ENCODE measurements at regions of chr10 and their contacts with region 1.

Region 1: GRCh38 chr10:83562381-83562780 is 576.9 kb upstream of the GHITM start:
- DNase-seq: no peak
- H3K4me3 ChIP-seq: no peak overlapping the region
- H3K27ac ChIP-seq: no peak overlapping the region
- H3K4me1 ChIP-seq: no peaks in the 10 kb centered on the region
- H3K27me3 ChIP-seq: no peaks in the 10 kb centered on the region
- CTCF ChIP-seq: no peak
- EP300 ChIP-seq: no peak
- POLR2A ChIP-seq: no peak

Region 2: GRCh38 chr10:83603708-83604107 is 41.3 kb after region 1 on chr10:
- in situ Hi-C with region 1: no loop called
- intact Hi-C with region 1: loop called (anchors 5 kb)
- DNase-seq: no peak
- H3K4me3 ChIP-seq: no peak overlapping the region
- H3K27ac ChIP-seq: no peak overlapping the region
- H3K4me1 ChIP-seq: no peaks in the 10 kb centered on the region
- H3K27me3 ChIP-seq: no peaks in the 10 kb centered on the region
- CTCF ChIP-seq: no peak
- EP300 ChIP-seq: no peak
- POLR2A ChIP-seq: no peak

Region 3: DNA sequence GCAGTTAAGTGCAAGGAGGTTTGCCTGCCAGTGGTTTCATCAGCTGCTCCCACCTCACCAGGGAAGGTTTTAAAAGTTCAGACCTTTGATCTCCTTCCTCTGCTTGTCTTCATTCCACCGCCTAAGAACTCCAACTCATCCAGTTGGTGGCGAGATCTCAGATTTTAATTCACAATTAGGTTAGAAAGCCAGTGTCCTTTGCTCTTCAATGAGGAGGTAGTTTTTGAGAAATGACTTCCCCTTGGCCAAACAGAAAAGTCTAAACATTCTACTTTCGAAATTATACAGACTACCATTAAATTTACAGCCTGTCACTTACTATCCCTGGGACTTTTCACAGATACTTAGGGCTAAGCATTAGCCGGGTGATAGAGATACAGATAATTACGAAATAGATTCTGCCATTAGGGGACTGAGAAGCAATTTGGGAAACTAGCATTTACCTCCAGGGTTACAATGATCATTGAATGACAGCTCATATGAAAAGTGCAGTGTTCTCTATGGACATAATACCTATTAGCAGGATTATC is 63.5 kb after region 1 on chr10:
- in situ Hi-C with region 1: no loop called
- intact Hi-C with region 1: no loop called
- DNase-seq: no peak
- H3K4me3 ChIP-seq: no peak overlapping the region
- H3K27ac ChIP-seq: no peak overlapping the region
- H3K4me1 ChIP-seq: no peaks in the 10 kb centered on the region
- H3K27me3 ChIP-seq: no peaks in the 10 kb centered on the region
- CTCF ChIP-seq: no peak
- EP300 ChIP-seq: no peak
- POLR2A ChIP-seq: no peak

Region 4: GRCh38 chr10:83724471-83725241 is 162.3 kb after region 1 on chr10:
- in situ Hi-C with region 1: no loop called
- intact Hi-C with region 1: no loop called
- DNase-seq: no peak
- H3K4me3 ChIP-seq: no peak overlapping the region
- H3K27ac ChIP-seq: no peak overlapping the region
- H3K4me1 ChIP-seq: no peaks in the 10 kb centered on the region
- H3K27me3 ChIP-seq: no peaks in the 10 kb centered on the region
- CTCF ChIP-seq: no peak
- EP300 ChIP-seq: no peak
- POLR2A ChIP-seq: no peak

Region 5: GRCh38 chr10:84214612-84215235 is 652.3 kb after region 1 on chr10:
- in situ Hi-C with region 1: no loop called
- intact Hi-C with region 1: no loop called
- DNase-seq: peak; percentile 36
- H3K4me3 ChIP-seq: no peak overlapping the region
- H3K27ac ChIP-seq: no peak overlapping the region
- H3K4me1 ChIP-seq: no peaks in the 10 kb centered on the region
- H3K27me3 ChIP-seq: no peaks in the 10 kb centered on the region
- CTCF ChIP-seq: peak in 4 of 5 experiments; percentile 29 to 60 (median 40)
- EP300 ChIP-seq: no peak
- POLR2A ChIP-seq: no peak

Measured in transverse colon (tissue), 4 donors.